B cell (primary cell): ENCODE measurements at regions of chr4 and their contacts with region 1.

Region 1: GRCh38 chr4:119233750-119234149 is 21.2 kb downstream of the USP53 start:
- DNase-seq: no peak
- ATAC-seq: no peak
- H3K4me3 ChIP-seq: no peak overlapping the region
- H3K4me3 Mint-ChIP-seq: peak overlapping the region; percentile 49
- H3K27ac ChIP-seq: no peak overlapping the region
- H3K27ac Mint-ChIP-seq: peak overlapping the region; percentile 16
- H3K4me1 ChIP-seq: peaks cover 6 to 8% of the 10 kb centered on the region in 2 donors
- H3K4me1 Mint-ChIP-seq: peaks cover 47% of the 10 kb centered on the region
- H3K27me3 ChIP-seq: no peaks in the 10 kb centered on the region
- H3K27me3 Mint-ChIP-seq: no peaks in the 10 kb centered on the region
- CTCF ChIP-seq: no peak

Region 2: GRCh38 chr4:119268451-119268850 is 34.7 kb after region 1 on chr4:
- CTCF ChIA-PET with region 1: no interaction called
- POLR2A ChIA-PET with region 1: no interaction called
- intact Hi-C with region 1: loop called (anchors 5 kb)
- DNase-seq: no peak
- ATAC-seq: no peak
- H3K4me3 ChIP-seq: no peak overlapping the region
- H3K4me3 Mint-ChIP-seq: no peak overlapping the region
- H3K27ac ChIP-seq: no peak overlapping the region
- H3K27ac Mint-ChIP-seq: no peak overlapping the region
- H3K4me1 ChIP-seq: no peaks in the 10 kb centered on the region
- H3K4me1 Mint-ChIP-seq: peaks cover 3% of the 10 kb centered on the region
- H3K27me3 ChIP-seq: no peaks in the 10 kb centered on the region
- H3K27me3 Mint-ChIP-seq: no peaks in the 10 kb centered on the region
- CTCF ChIP-seq: no peak